A549 (cell line): ENCODE measurements at regions of chr10 and their contacts with region 1.

Region 1: DNA sequence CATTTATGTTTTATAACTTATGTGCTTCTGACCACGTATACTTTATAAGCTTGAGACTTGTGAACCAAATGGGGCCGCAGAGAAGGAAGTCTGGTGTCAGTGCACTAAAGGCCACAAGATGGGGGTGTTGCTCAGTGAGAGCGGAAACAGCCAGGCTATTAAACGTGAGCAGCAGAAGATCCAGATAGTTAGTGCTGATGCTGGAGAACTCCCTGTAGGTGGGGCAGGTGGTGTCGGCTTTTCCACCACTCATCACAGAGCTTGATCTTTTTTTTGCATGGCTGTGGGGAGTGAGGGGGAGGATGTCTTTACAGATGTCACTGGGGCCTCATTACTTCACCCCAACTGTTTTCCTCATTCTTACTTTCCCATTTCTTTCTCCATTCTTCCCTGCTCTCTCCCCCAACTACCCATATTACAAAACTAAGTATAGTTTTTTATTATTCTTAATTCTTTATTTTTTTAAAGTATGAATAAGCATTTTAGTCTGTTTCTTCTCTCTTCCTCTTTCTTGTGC is 34.7 kb downstream of the ACADSB start:
- DNase-seq: peak; percentile 58 to 78
- ATAC-seq: peak; percentile 99
- H3K4me3 ChIP-seq: no peak overlapping the region
- H3K27ac ChIP-seq: no peak overlapping the region
- H3K4me1 ChIP-seq: no peaks in the 10 kb centered on the region
- CTCF ChIP-seq: peak; percentile 81
- EP300 ChIP-seq: no peak
- POLR2A ChIP-seq: no peak
- RAD21 ChIP-seq: peak; percentile 85 to 90

Region 2: GRCh38 chr10:122342293-122343134 is 701.0 kb before region 1 on chr10:
- CTCF ChIA-PET with region 1: no interaction called
- POLR2A ChIA-PET with region 1: no interaction called
- DNase-seq: peak; percentile 44 to 71
- ATAC-seq: peak; percentile 81 to 83
- H3K4me3 ChIP-seq: no peak overlapping the region
- H3K27ac ChIP-seq: peak overlapping the region; percentile 32 to 42; a peak in 3 of 6 replicates
- H3K4me1 ChIP-seq: peaks cover 16% of the 10 kb centered on the region
- CTCF ChIP-seq: peak; percentile 72
- EP300 ChIP-seq: no peak
- POLR2A ChIP-seq: no peak
- RAD21 ChIP-seq: peak; percentile 75 to 78

Region 3: GRCh38 chr10:122953827-122954730 is 89.4 kb before region 1 on chr10 and contains the start of gene C10orf88:
- CTCF ChIA-PET with region 1: no interaction called
- POLR2A ChIA-PET with region 1: no interaction called
- DNase-seq: peak; percentile 94 to 99
- ATAC-seq: peak; percentile 99 to 100
- H3K4me3 ChIP-seq: peak within 1 kb of the TSS; percentile 96
- H3K27ac ChIP-seq: peak within 1 kb of the TSS; percentile 97
- H3K4me1 ChIP-seq: peaks cover 18% of the 10 kb centered on the region
- CTCF ChIP-seq: no peak
- EP300 ChIP-seq: no peak
- POLR2A ChIP-seq: peak; percentile 66
- RAD21 ChIP-seq: peak in 1 of 2 experiments; percentile 23; a peak in 2 of 5 replicates
- polyA plus RNA-seq, gene C10orf88: 10.4 and 11.0 TPM in 2 replicates

Region 4: GRCh38 chr10:123031124-123031523 is 12.3 kb before region 1 on chr10:
- CTCF ChIA-PET with region 1: interaction called, 27 read pairs
- POLR2A ChIA-PET with region 1: no interaction called
- DNase-seq: no peak
- ATAC-seq: no peak
- H3K4me3 ChIP-seq: no peak overlapping the region
- H3K27ac ChIP-seq: no peak overlapping the region
- H3K4me1 ChIP-seq: no peaks in the 10 kb centered on the region
- CTCF ChIP-seq: no peak
- EP300 ChIP-seq: no peak
- POLR2A ChIP-seq: no peak
- RAD21 ChIP-seq: no peak

Region 5: DNA sequence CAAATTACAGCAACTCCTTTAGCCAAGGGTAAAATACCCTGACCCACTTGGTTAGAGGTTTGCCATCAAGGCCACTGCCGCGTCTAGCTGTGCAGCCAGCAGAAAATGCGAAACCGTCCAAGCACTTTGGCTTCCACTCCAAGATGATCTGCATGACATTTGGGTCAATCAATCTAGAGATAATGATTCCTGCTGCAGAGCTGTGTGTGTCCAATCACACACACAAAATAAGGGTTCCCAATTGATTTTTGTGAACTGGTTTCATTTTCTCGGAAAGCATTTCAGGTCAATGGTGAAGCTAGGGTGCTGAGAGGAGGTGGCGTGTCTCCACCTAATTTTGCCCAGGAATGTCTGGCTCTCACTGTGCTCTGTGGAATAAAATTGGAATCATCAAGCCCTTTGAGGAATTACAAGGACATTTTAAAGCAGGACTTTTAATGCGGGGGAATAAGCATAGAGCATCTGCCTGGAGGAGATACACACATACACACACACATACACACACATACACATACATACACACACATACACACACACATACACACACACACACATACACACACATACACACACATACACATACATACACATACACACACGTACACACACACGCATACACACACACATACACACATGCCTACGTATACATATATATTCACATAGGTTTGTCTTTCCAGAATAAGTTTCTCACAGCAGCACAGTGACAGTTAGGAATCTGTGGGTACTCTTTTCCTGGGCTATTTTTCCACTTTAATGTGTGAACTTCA is 24.8 kb after region 1 on chr10:
- CTCF ChIA-PET with region 1: interaction called, 16 read pairs
- POLR2A ChIA-PET with region 1: no interaction called
- DNase-seq: no peak
- ATAC-seq: no peak
- H3K4me3 ChIP-seq: no peak overlapping the region
- H3K27ac ChIP-seq: no peak overlapping the region
- H3K4me1 ChIP-seq: no peaks in the 10 kb centered on the region
- CTCF ChIP-seq: no peak
- EP300 ChIP-seq: no peak
- POLR2A ChIP-seq: no peak
- RAD21 ChIP-seq: no peak

Region 6: DNA sequence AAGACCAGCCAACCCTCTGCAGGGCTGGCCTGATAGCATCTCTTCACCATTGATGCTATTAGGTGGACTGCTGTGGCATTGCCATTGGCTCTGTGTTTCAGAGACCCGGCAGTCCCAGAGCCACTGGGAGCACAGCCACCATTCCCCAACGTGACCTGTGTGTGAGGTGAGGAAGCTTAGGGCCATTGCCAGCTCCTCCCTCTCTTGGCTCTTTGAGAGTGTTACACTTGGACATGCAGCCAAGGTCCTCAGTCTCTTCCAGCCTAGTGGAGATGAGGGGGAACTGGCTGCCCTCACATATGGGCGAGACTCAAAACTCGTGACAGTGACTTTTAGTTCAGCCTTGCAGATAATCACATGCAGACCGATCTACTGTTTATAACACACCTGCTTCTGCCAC is 53.0 kb after region 1 on chr10:
- CTCF ChIA-PET with region 1: no interaction called
- POLR2A ChIA-PET with region 1: no interaction called
- DNase-seq: no peak
- ATAC-seq: peak in 1 of 2 experiments; percentile 46; a peak in 3 of 6 replicates
- H3K4me3 ChIP-seq: no peak overlapping the region
- H3K27ac ChIP-seq: no peak overlapping the region
- H3K4me1 ChIP-seq: no peaks in the 10 kb centered on the region
- CTCF ChIP-seq: no peak
- EP300 ChIP-seq: no peak
- POLR2A ChIP-seq: no peak
- RAD21 ChIP-seq: no peak

Region 7: GRCh38 chr10:123132576-123133477 is 89.4 kb after region 1 on chr10:
- CTCF ChIA-PET with region 1: interaction called, 52 read pairs
- POLR2A ChIA-PET with region 1: no interaction called
- DNase-seq: peak; percentile 88 to 90
- ATAC-seq: peak; percentile 72 to 88
- H3K4me3 ChIP-seq: peak overlapping the region; percentile 38
- H3K27ac ChIP-seq: no peak overlapping the region
- H3K4me1 ChIP-seq: peaks cover 25% of the 10 kb centered on the region; the same call in 2 of the 3 replicates
- CTCF ChIP-seq: peak; percentile 88
- EP300 ChIP-seq: no peak
- POLR2A ChIP-seq: no peak
- RAD21 ChIP-seq: peak; percentile 90 to 93

Region 8: DNA sequence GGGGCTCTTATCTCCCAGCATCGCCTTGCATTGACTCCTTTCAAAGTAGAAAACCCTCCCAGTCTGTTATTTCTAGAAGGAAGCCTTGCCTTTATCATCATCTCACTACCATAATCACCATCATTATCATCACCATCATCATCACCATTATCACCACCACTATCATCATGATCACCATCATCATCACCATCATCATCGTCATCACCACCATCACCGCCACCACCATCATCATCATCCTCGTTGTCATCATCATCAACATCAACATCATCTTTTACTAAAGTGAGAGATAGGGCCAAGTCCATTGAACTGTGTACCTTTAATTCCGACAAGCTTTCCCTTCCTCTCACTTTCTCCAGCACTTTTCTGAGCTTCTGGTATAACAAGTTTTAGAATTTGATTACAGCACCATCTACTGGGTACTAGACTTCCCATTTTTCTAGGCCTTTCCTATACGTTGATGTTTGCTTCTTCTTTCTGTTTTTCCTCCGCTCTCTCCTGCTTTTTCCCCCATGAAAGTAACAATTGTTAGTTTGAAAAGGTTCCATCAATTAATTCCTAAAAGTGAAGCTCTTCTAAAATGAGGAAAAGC is 337.1 kb after region 1 on chr10:
- CTCF ChIA-PET with region 1: interaction called, 70 read pairs
- POLR2A ChIA-PET with region 1: no interaction called
- DNase-seq: peak; percentile 12 to 35
- ATAC-seq: peak; percentile 52 to 76; a peak in 4 of 6 replicates
- H3K4me3 ChIP-seq: no peak overlapping the region
- H3K27ac ChIP-seq: no peak overlapping the region
- H3K4me1 ChIP-seq: peaks cover 10% of the 10 kb centered on the region
- CTCF ChIP-seq: peak; percentile 52
- EP300 ChIP-seq: no peak
- POLR2A ChIP-seq: no peak
- RAD21 ChIP-seq: peak; percentile 61 to 65

Region 9: DNA sequence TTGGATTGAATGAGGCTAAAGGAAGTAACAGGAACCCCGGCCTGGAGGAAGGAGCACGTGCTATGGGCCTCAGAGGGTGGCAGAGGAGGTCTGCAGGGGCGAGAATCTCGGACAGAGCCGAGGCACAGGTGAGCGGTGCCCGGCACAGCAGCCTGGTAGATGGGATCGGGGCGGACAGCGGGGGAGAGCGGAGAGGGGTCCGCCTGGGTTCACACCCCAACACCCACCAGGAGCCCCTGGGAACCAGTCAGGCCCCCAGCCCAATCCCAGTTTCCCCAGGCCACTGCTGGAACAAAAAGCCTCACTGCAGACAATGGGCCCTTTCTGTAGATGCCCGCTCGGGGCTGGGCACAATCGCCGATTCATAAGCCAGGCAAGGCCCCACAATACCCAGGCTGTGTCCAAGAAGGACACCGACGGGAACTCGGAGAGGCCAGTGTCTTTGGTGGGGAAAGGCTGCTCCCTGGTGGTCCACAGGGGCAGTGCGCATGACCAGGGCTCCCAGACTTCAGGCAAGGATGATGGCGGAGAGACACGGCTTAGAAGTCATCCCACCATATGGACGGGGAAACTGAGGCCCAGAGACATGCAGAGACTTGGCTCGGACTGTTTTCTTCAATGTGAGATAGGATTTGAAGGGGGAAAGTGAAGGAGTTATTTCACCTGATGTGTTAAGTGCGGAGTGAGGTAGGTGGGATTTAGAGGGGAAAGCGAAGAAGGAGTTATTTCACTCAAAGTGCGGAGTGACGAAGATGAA is 515.8 kb after region 1 on chr10:
- CTCF ChIA-PET with region 1: interaction called, 130 read pairs
- POLR2A ChIA-PET with region 1: no interaction called
- DNase-seq: peak; percentile 60 to 88
- ATAC-seq: peak; percentile 87 to 96
- H3K4me3 ChIP-seq: no peak overlapping the region
- H3K27ac ChIP-seq: no peak overlapping the region
- H3K4me1 ChIP-seq: no peaks in the 10 kb centered on the region
- CTCF ChIP-seq: peak; percentile 86
- EP300 ChIP-seq: no peak
- POLR2A ChIP-seq: no peak
- RAD21 ChIP-seq: peak; percentile 95 to 96